Dendritic cell treated with granulocyte-macrophage colony-stimulating factor and Interleukin-4, amounts not matched to agents 40 ng/mL and 50 ng/mL, for 4 days (primary cell): ENCODE measurements at regions of chr13 and their contacts with region 1.

Region 1: GRCh38 chr13:95660981-95661581 is 15.9 kb upstream of the DNAJC3 start:
- H3K4me3 Mint-ChIP-seq: no peak overlapping the region
- H3K27ac Mint-ChIP-seq: no peak overlapping the region
- H3K4me1 Mint-ChIP-seq: no peaks in the 10 kb centered on the region
- H3K27me3 Mint-ChIP-seq: no peaks in the 10 kb centered on the region

Region 2: DNA sequence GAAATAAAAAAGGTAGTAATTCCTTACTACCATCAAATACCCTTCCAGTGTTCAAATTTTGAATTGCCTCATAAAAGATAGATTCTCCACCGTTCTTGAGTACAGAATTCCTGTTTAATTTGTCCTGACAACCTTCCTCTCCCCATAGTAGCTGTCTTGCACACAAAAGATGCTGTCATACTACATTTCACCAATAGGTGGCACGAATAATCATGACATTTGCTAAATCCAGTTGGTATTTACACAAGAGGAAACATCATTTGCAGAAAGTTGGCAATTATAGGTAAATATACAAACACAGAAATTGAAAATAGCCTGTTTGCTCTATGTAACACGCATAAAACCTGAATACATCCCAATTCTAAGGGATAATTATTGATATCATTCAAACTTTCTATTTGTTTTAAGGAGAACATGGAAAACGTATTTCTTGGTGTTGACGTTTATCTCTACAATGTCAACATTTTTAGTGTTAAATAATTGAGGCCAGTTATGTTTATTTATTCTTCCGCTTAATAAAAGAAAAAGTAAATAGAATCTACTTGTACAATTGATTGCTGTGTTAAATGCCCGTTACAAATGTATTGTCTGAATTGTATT is 166.9 kb before region 1 on chr13:
- intact Hi-C with region 1: loop called (anchors 5 kb)
- H3K4me3 Mint-ChIP-seq: no peak overlapping the region
- H3K27ac Mint-ChIP-seq: no peak overlapping the region
- H3K4me1 Mint-ChIP-seq: peaks cover 30% of the 10 kb centered on the region
- H3K27me3 Mint-ChIP-seq: no peaks in the 10 kb centered on the region

Region 3: DNA sequence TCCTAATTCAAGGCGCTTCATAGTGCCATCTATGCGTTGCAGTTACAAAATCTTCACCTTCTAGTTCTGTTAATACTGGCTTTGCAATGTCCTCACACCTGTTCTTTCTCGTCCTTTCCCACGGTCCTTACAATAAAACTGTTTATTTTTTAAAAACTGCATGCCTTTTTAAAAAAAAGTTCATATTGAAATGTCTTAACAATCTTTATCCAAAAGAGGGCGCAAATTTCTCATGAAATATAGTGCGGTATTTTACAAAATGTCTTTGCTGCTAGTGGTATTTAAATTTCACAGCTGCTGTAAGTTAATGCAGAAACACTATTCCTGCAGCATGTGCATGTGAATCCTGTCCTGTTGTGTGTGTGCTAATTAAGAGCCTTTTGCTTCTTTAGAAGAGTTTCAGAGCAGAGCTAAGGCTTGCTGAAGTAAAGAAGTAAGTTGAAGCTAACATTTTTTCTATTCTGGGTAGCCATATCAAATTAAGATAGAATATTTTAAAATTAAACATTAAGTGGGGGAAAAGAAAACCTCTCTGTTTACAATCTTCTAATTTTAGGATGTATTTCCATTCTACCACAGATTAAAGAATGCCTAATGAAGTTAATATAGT is 124.3 kb before region 1 on chr13:
- intact Hi-C with region 1: loop called (anchors 1 kb)
- H3K4me3 Mint-ChIP-seq: no peak overlapping the region
- H3K27ac Mint-ChIP-seq: no peak overlapping the region
- H3K4me1 Mint-ChIP-seq: peaks cover 19% of the 10 kb centered on the region
- H3K27me3 Mint-ChIP-seq: no peaks in the 10 kb centered on the region

Region 4: GRCh38 chr13:95607363-95607762 is 53.7 kb before region 1 on chr13:
- intact Hi-C with region 1: no loop called
- H3K4me3 Mint-ChIP-seq: no peak overlapping the region
- H3K27ac Mint-ChIP-seq: no peak overlapping the region
- H3K4me1 Mint-ChIP-seq: no peaks in the 10 kb centered on the region
- H3K27me3 Mint-ChIP-seq: no peaks in the 10 kb centered on the region

Region 5: GRCh38 chr13:95698047-95698749 is 37.1 kb after region 1 on chr13:
- intact Hi-C with region 1: no loop called
- H3K4me3 Mint-ChIP-seq: no peak overlapping the region
- H3K27ac Mint-ChIP-seq: no peak overlapping the region
- H3K4me1 Mint-ChIP-seq: peaks cover 42% of the 10 kb centered on the region
- H3K27me3 Mint-ChIP-seq: no peaks in the 10 kb centered on the region